Esophagus muscularis mucosa (tissue), 4 donors: ENCODE measurements at regions of chr14 and their contacts with region 1.

Region 1: GRCh38 chr14:59189786-59190771 is 1.6 kb downstream of the DAAM1 start:
- DNase-seq: peak; percentile 97
- H3K4me3 ChIP-seq: peak overlapping the region; percentile 79 to 92 (median 84)
- H3K27ac ChIP-seq: peak overlapping the region; percentile 94 to 97 (median 96)
- H3K4me1 ChIP-seq: peaks cover 51 to 56% (median 56%) of the 10 kb centered on the region in 4 donors
- H3K27me3 ChIP-seq: no peaks in the 10 kb centered on the region
- CTCF ChIP-seq: peak; percentile 6 to 12 (median 6)
- EP300 ChIP-seq: no peak
- POLR2A ChIP-seq: no peak

Region 2: DNA sequence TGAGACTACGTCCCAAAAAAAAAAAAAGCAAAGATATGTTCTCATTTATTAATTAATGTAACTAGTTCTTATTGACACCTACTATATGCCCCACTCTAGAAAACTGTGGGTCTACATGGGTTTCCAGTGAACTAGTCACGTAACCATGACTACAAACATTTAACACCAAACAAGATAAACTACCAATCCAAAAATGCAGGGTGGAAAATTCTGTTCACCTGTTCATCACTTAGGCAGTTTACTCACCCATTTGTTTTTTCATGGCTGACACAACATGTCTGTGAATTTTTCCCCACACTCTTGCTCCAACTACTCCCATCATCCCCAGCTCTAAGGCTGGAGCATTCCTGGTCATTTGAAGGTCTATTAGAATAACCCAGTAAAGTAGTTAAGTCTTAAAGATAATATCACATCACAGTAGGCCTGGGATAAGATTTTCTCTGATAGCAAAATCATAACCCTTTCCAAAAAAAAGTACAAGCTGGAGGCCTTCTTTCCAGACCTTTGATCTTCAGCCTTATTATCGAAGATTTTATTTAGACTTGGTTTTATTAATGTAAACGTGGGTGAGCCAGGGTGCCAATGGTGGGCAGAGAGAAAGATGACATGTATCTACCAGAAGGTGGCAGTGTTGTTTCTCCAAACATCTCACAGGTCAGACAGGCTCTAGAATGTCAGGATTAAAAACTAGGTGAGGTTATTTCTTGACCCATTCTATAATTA is 63.2 kb before region 1 on chr14:
- intact Hi-C with region 1: no loop called
- DNase-seq: no peak
- H3K4me3 ChIP-seq: no peak overlapping the region
- H3K27ac ChIP-seq: no peak overlapping the region
- H3K4me1 ChIP-seq: peaks cover 0 to 14% (median 11%) of the 10 kb centered on the region in 4 donors
- H3K27me3 ChIP-seq: no peaks in the 10 kb centered on the region
- CTCF ChIP-seq: peak; percentile 81 to 89 (median 83)
- EP300 ChIP-seq: no peak
- POLR2A ChIP-seq: no peak

Region 3: DNA sequence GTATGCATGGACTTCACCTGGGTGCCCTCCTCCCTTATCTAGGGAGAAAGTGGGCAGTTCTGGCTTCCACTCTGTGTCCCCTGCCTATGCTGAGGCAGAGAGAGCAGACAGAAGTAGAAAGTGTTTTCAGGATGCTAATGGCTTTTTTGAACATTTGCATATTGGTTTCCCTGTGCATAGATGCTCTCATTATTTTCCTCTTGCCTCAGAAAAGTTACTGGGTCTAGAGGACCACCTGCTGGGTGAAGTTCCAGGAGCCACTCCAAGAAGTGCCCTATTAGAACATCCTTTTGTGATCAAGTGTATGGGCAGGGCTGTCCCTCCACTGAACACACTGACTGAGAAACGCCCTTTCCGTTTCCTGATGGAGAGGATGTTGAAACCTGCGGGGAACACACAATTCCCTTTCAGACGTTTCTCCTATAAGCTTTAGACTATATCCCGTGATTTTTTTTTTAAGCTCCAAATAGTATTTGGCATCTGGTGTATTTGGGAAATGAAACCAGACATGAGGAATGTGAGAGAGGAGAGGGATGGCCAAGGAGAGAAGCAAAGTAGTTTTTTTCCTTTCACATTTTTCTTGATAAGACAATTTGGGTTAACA is 65.0 kb after region 1 on chr14:
- intact Hi-C with region 1: loop called (anchors 5 kb)
- DNase-seq: no peak
- H3K4me3 ChIP-seq: peak overlapping the region in 1 of 4 donors; percentile 22
- H3K27ac ChIP-seq: peak overlapping the region; percentile 86 to 88 (median 86)
- H3K4me1 ChIP-seq: peaks cover 67 to 97% (median 89%) of the 10 kb centered on the region in 4 donors
- H3K27me3 ChIP-seq: no peaks in the 10 kb centered on the region
- CTCF ChIP-seq: no peak
- EP300 ChIP-seq: no peak
- POLR2A ChIP-seq: no peak

Region 4: GRCh38 chr14:59313144-59313651 is 123.1 kb after region 1 on chr14:
- intact Hi-C with region 1: loop called (anchors 10 kb)
- DNase-seq: no peak
- H3K4me3 ChIP-seq: no peak overlapping the region
- H3K27ac ChIP-seq: peak overlapping the region; percentile 61 to 76 (median 69)
- H3K4me1 ChIP-seq: peaks cover 47 to 87% (median 87%) of the 10 kb centered on the region in 4 donors
- H3K27me3 ChIP-seq: no peaks in the 10 kb centered on the region
- CTCF ChIP-seq: no peak
- EP300 ChIP-seq: no peak
- POLR2A ChIP-seq: no peak

Region 5: GRCh38 chr14:59428581-59429012 is 238.5 kb after region 1 on chr14:
- intact Hi-C with region 1: loop called (anchors 5 kb)
- DNase-seq: no peak
- H3K4me3 ChIP-seq: no peak overlapping the region
- H3K27ac ChIP-seq: peak overlapping the region; percentile 56 to 77 (median 72)
- H3K4me1 ChIP-seq: peaks cover 34 to 68% (median 46%) of the 10 kb centered on the region in 4 donors
- H3K27me3 ChIP-seq: no peaks in the 10 kb centered on the region
- CTCF ChIP-seq: peak; percentile 43 to 57 (median 48)
- EP300 ChIP-seq: no peak
- POLR2A ChIP-seq: no peak

Region 6: DNA sequence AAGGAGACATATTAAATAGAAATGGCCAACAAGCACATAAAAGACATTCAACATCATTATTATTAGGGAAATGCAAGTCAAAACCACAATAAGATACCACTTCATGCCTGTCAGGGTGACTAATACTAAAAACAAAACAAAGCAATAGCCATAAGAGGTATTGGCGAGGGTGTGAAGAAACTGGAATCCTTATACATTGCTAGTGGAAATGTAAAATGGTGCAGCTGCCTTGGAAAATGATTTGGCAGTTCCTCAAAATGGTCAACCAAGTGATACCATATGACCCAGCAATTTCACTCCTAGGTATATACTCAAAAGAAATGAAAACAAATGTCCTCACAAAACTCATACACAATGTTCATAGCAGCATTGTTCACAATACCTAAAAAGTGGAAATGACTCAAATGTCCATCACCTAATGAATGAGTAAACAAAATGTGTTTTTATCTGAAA is 248.1 kb after region 1 on chr14:
- intact Hi-C with region 1: loop called (anchors 5 kb)
- DNase-seq: no peak
- H3K4me3 ChIP-seq: no peak overlapping the region
- H3K27ac ChIP-seq: peak overlapping the region; percentile 40 to 62 (median 51)
- H3K4me1 ChIP-seq: peaks cover 14 to 50% (median 36%) of the 10 kb centered on the region in 4 donors
- H3K27me3 ChIP-seq: no peaks in the 10 kb centered on the region
- CTCF ChIP-seq: no peak
- EP300 ChIP-seq: no peak
- POLR2A ChIP-seq: no peak